Activated CD4-positive, alpha-beta memory T cell treated with anti-CD3 and anti-CD28 coated beads, Interleukin-2, amount 10 ng/mL, durations not matched to agents 7 days and 5 days (primary cell): ENCODE measurements at regions of chr20 and their contacts with region 1.

Region 1: DNA sequence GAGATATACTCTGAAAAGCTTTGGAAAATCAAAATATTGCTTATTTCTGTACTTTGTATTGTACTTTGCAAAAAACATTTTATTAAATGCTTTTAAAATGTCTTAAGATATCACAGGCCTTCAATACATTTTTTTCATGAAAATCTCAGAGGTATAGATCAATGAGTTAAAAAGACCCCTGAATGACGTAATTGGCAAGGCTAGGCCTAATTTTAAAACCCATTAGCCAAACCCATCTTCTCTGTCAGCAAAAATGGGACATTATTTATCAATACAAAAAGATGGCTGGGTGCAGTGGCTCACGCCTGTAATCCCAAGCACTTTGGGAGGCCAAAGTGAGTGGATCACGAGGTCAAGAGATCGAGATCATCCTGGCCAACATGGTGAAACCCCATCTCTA is 84.8 kb upstream of the PAK5 start:
- DNase-seq: no peak
- H3K4me3 Mint-ChIP-seq: no peak overlapping the region
- H3K27ac Mint-ChIP-seq: no peak overlapping the region
- H3K4me1 Mint-ChIP-seq: no peaks in the 10 kb centered on the region
- H3K27me3 Mint-ChIP-seq: no peaks in the 10 kb centered on the region

Region 2: GRCh38 chr20:9912858-9913434 is 10.7 kb before region 1 on chr20:
- CTCF ChIA-PET with region 1: interaction called, 17 read pairs
- POLR2A ChIA-PET with region 1: no interaction called
- DNase-seq: peak; percentile 26
- H3K4me3 Mint-ChIP-seq: no peak overlapping the region
- H3K27ac Mint-ChIP-seq: no peak overlapping the region
- H3K4me1 Mint-ChIP-seq: no peaks in the 10 kb centered on the region
- H3K27me3 Mint-ChIP-seq: peaks cover 6% of the 10 kb centered on the region

Region 3: GRCh38 chr20:10060226-10060625 is 136.6 kb after region 1 on chr20:
- CTCF ChIA-PET with region 1: no interaction called
- POLR2A ChIA-PET with region 1: no interaction called
- DNase-seq: no peak
- H3K4me3 Mint-ChIP-seq: no peak overlapping the region
- H3K27ac Mint-ChIP-seq: no peak overlapping the region
- H3K4me1 Mint-ChIP-seq: no peaks in the 10 kb centered on the region
- H3K27me3 Mint-ChIP-seq: peaks cover 2% of the 10 kb centered on the region